Ascending aorta (tissue), 2 donors: ENCODE measurements at regions of chr10 and their contacts with region 1.

Region 1: DNA sequence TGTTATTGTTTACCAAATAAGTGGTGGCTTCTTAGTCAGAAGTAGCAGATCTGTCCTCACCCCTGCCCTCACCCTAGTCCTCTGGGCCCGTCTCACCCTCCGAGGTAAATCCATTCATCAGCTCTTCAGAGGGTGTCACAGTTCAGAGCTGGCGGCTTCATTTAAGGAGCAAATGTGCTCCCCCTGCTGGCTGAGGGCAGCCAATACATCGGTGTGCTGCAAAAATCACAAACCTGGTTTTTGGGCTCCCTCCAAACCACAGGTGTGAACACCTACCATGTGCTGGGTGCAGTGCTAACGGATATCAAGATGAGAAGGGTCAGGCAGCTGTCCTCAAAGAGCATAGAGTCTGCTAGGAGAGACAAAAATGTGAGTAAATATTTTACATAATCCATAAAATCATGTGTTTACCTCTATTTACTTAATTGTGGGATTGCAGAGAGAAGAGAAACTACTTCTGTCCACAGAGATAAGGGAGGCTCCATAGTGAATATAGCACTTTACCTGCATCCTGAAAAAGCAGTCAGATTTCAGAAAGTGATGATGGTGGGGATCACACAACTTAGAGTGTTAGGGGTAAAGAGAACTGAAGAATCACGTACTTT is 15.5 kb upstream of the CRTAC1 start:
- DNase-seq: peak in 1 of 2 donors; percentile 68
- H3K4me3 ChIP-seq: no peak overlapping the region
- H3K27ac ChIP-seq: no peak overlapping the region
- H3K4me1 ChIP-seq: no peaks in the 10 kb centered on the region
- H3K27me3 ChIP-seq: no peaks in the 10 kb centered on the region
- CTCF ChIP-seq: peak; percentile 39 to 79 (median 75)

Region 2: GRCh38 chr10:97914837-97915211 is 131.1 kb before region 1 on chr10:
- intact Hi-C with region 1: loop called (anchors 1 kb)
- DNase-seq: peak in 1 of 2 donors; percentile 73
- H3K4me3 ChIP-seq: no peak overlapping the region
- H3K27ac ChIP-seq: no peak overlapping the region
- H3K4me1 ChIP-seq: no peaks in the 10 kb centered on the region
- H3K27me3 ChIP-seq: no peaks in the 10 kb centered on the region
- CTCF ChIP-seq: peak; percentile 60 to 87 (median 83)